CD14-positive monocyte (primary cell): ENCODE measurements at regions of chr9 and their contacts with region 1.

Region 1: GRCh38 chr9:123542435-123543225 is 186.6 kb downstream of the CRB2 start:
- DNase-seq: no peak
- H3K4me3 ChIP-seq: no peak overlapping the region
- H3K4me3 Mint-ChIP-seq: no peak overlapping the region
- H3K27ac ChIP-seq: no peak overlapping the region
- H3K27ac Mint-ChIP-seq: peak overlapping the region in 1 of 7 donors; percentile 47
- H3K4me1 ChIP-seq: no peaks in the 10 kb centered on the region
- H3K4me1 Mint-ChIP-seq: peaks cover 3% of the 10 kb centered on the region
- H3K27me3 ChIP-seq: no peaks in the 10 kb centered on the region
- H3K27me3 Mint-ChIP-seq: peaks cover 0 to 2% (median 0%) of the 10 kb centered on the region in 3 donors
- CTCF ChIP-seq: no peak

Region 2: DNA sequence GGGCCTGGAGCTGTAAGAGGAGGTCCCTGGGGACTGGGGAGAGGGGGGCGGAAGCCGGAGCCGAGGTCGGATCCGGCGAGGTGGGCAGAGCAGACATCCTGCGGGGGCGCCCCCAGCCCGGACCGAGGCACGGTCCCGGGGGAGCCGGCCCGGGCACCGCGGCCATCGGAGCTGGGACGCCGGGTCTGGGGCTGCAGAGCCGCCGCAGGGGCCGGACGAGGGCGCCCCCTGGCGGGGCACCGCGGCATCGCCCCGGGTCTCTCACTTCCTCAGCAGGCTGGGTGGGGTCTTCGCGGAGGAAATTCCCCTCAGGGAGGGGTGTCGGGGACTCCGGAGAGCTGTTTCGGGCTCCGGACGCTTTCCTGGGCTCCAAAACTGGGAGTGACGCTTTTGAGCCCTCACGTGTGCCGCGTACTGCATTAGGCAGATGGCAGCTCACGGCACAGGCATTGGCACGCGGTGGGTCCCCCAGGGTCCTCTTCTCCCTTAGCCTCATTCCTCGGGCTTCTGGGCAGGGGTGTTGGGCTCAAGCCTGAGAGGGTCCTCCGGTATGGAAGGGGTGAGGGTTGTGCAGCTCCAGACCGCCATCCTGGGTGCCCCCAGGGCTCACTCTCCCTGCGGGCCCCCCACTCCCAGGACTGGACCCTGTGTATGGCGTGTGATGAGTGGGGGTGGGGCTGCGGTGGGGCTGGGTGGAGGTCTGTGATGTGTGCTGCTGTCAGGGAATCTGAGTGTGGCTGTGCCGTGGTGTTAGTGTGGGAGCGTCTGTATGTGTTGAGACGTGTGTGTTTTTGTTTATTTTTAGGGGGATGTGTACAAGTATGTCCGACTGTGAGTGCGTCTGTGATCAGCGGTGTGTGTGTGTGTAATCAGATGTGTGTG is 498.5 kb after region 1 on chr9:
- intact Hi-C with region 1: loop called in 1 of 2 experiments (anchors 2 kb)
- DNase-seq: peak; percentile 33 to 61 (median 58)
- H3K4me3 ChIP-seq: peak overlapping the region in 2 of 3 experiments; percentile 20 to 69
- H3K4me3 Mint-ChIP-seq: peak overlapping the region; percentile 69 to 84
- H3K27ac ChIP-seq: no peak overlapping the region
- H3K27ac Mint-ChIP-seq: no peak overlapping the region
- H3K4me1 ChIP-seq: peaks cover 8 to 20% of the 10 kb centered on the region in 2 donors
- H3K4me1 Mint-ChIP-seq: peaks cover 24% of the 10 kb centered on the region
- H3K27me3 ChIP-seq: peaks cover 35 to 83% of the 10 kb centered on the region in 2 donors
- H3K27me3 Mint-ChIP-seq: peaks cover 81 to 95% (median 84%) of the 10 kb centered on the region in 3 donors
- CTCF ChIP-seq: peak; percentile 99